ENCODE measurements at regions of chr4 and their contacts with region 1.

Region 1: GRCh38 chr4:141860974-141861373 is 224.6 kb downstream of the IL15 start:
- DNase-seq: peak in 3 of 14 experiments; percentile 2 to 13 (median 5)
- ATAC-seq: no peak
- H3K4me3 ChIP-seq: no peak overlapping the region
- H3K4me3 Mint-ChIP-seq: no peak overlapping the region
- H3K27ac ChIP-seq: no peak overlapping the region
- H3K27ac Mint-ChIP-seq: no peak overlapping the region
- H3K4me1 ChIP-seq: no peaks in the 10 kb centered on the region
- H3K4me1 Mint-ChIP-seq: no peaks in the 10 kb centered on the region
- H3K27me3 ChIP-seq: no peaks in the 10 kb centered on the region
- H3K27me3 Mint-ChIP-seq: peaks cover 5% of the 10 kb centered on the region
- CTCF ChIP-seq: no peak

Region 2: GRCh38 chr4:142840516-142841123 is 979.6 kb after region 1 on chr4:
- CTCF ChIA-PET with region 1: no interaction called
- POLR2A ChIA-PET with region 1: no interaction called
- intact Hi-C with region 1: loop called (anchors 5 kb)
- DNase-seq: peak in 4 of 14 experiments; percentile 16 to 68 (median 56)
- ATAC-seq: no peak
- H3K4me3 ChIP-seq: no peak overlapping the region
- H3K4me3 Mint-ChIP-seq: no peak overlapping the region
- H3K27ac ChIP-seq: no peak overlapping the region
- H3K27ac Mint-ChIP-seq: no peak overlapping the region
- H3K4me1 ChIP-seq: peaks cover 6% of the 10 kb centered on the region
- H3K4me1 Mint-ChIP-seq: peaks cover 14% of the 10 kb centered on the region
- H3K27me3 ChIP-seq: peaks cover 0 to 6% of the 10 kb centered on the region in 2 experiments
- H3K27me3 Mint-ChIP-seq: peaks cover 6% of the 10 kb centered on the region
- CTCF ChIP-seq: peak; percentile 73

Measured in CD4-positive, alpha-beta T cell (primary cell).